ENCODE measurements at regions of chr9 and their contacts with region 1.

Region 1: GRCh38 chr9:124257844-124258606 is at the start of gene NEK6:
- DNase-seq: peak; percentile 32
- H3K4me3 ChIP-seq: peak within 1 kb of the TSS; percentile 4 to 90 (median 70)
- H3K27ac ChIP-seq: peak within 1 kb of the TSS; percentile 76
- H3K4me1 ChIP-seq: peaks cover 38% of the 10 kb centered on the region
- H3K27me3 ChIP-seq: no peaks in the 10 kb centered on the region
- CTCF ChIP-seq: no peak
- POLR2A ChIP-seq: no peak
- total RNA-seq, gene NEK6: 65.9 and 67.1 TPM in 2 replicates

Region 2: DNA sequence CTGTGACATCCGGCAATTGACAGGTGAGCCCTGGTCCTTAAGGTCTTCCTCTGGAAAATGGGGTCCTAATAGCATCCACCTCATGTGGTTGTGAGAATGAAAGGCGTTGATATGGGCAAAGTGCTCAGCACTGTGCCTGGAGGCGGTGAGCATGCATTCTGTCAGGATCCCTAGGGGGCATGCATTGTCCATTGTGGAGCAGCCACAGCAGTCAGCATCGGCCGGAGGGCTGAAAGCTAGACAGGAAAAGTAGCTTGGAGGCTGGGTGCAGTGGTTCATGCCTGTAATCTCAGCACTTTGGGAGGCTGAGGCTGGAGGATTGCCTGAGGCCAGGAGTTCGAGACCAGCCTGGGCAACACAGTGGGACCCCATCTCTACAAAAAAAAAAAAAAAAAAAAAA is 124.3 kb before region 1 on chr9:
- CTCF ChIA-PET with region 1: interaction called, 20 read pairs
- POLR2A ChIA-PET with region 1: no interaction called
- dilution Hi-C with region 1: no loop called
- intact Hi-C with region 1: no loop called
- DNase-seq: peak; percentile 68
- H3K4me3 ChIP-seq: no peak overlapping the region
- H3K27ac ChIP-seq: no peak overlapping the region
- H3K4me1 ChIP-seq: peaks cover 7% of the 10 kb centered on the region
- H3K27me3 ChIP-seq: no peaks in the 10 kb centered on the region
- CTCF ChIP-seq: peak; percentile 36 to 64
- POLR2A ChIP-seq: no peak

Region 3: DNA sequence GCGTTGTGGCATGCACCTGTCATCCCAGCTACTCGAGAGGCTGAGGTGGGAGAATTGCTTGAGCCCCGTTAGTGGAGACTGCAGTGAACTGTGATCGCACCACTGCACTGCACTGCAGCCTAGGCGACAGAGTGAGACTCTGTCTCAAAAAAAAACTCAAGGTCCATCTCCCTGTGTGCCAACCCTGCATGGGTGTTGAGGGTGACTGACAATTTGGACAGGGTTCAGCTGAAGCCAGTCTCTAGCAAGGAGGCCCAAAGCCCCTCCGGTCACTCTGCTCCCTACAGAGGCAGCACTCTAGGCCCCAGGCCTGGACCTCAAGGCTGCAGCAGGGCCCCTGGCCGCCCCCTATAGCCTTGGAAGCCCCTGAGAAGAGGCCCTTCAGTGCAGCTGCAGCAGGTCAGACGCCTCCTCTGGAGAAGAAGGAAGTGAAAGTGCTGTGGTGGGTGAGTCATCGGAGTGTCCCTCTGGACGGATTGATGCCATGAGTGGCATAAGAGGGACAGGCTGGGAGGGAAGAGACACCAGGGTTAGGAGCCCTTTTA is 39.5 kb before region 1 on chr9:
- CTCF ChIA-PET with region 1: interaction called, 3 read pairs
- POLR2A ChIA-PET with region 1: no interaction called
- dilution Hi-C with region 1: no loop called
- intact Hi-C with region 1: loop called (anchors 2 kb)
- DNase-seq: peak; percentile 68
- H3K4me3 ChIP-seq: no peak overlapping the region
- H3K27ac ChIP-seq: peak overlapping the region; percentile 42
- H3K4me1 ChIP-seq: peaks cover 53% of the 10 kb centered on the region
- H3K27me3 ChIP-seq: no peaks in the 10 kb centered on the region
- CTCF ChIP-seq: peak in 1 of 2 donors; percentile 20
- POLR2A ChIP-seq: no peak

Region 4: DNA sequence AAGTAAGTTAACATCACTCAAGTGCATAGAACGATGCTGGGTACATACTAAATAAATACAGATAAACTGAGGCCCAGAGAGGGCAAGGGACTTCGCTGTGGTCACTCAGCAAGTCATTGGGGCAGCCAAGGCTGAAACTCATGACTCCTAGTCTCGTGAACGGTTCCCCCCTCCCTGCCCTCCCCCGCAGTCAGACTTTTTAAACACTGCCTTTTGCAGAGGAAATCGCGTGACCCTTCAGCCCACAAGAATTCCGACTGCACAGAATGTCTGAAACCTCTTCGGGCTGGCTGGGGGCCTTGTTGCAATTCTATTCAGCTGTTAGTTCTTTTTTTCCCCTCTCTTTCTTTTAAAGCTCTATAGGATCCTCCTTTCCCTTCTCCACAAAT is 27.9 kb after region 1 on chr9:
- CTCF ChIA-PET with region 1: interaction called, 9 read pairs
- POLR2A ChIA-PET with region 1: interaction called, 3 read pairs
- dilution Hi-C with region 1: no loop called
- intact Hi-C with region 1: loop called (anchors 1 kb)
- DNase-seq: peak; percentile 90
- H3K4me3 ChIP-seq: no peak overlapping the region
- H3K27ac ChIP-seq: peak overlapping the region; percentile 89
- H3K4me1 ChIP-seq: peaks cover 59% of the 10 kb centered on the region
- H3K27me3 ChIP-seq: no peaks in the 10 kb centered on the region
- CTCF ChIP-seq: no peak
- POLR2A ChIP-seq: no peak

Region 5: GRCh38 chr9:124309665-124310064 is 51.6 kb after region 1 on chr9:
- CTCF ChIA-PET with region 1: interaction called, 4 read pairs
- POLR2A ChIA-PET with region 1: interaction called, 3 read pairs
- dilution Hi-C with region 1: no loop called
- intact Hi-C with region 1: loop called (anchors 1 kb)
- DNase-seq: peak; percentile 97
- H3K4me3 ChIP-seq: no peak overlapping the region
- H3K27ac ChIP-seq: peak overlapping the region; percentile 84
- H3K4me1 ChIP-seq: peaks cover 31% of the 10 kb centered on the region
- H3K27me3 ChIP-seq: no peaks in the 10 kb centered on the region
- CTCF ChIP-seq: no peak
- POLR2A ChIP-seq: no peak

Region 6: GRCh38 chr9:124415102-124415851 is 157.3 kb after region 1 on chr9 and contains the start of gene PSMB7:
- CTCF ChIA-PET with region 1: no interaction called
- POLR2A ChIA-PET with region 1: no interaction called
- dilution Hi-C with region 1: no loop called
- intact Hi-C with region 1: loop called (anchors 5 kb)
- DNase-seq: peak; percentile 97
- H3K4me3 ChIP-seq: peak within 1 kb of the TSS; percentile 63 to 97 (median 74)
- H3K27ac ChIP-seq: peak within 1 kb of the TSS; percentile 88
- H3K4me1 ChIP-seq: peaks cover 36% of the 10 kb centered on the region
- H3K27me3 ChIP-seq: no peaks in the 10 kb centered on the region
- CTCF ChIP-seq: peak; percentile 86 to 87
- POLR2A ChIP-seq: peak; percentile 26
- total RNA-seq, gene PSMB7: 227 and 241 TPM in 2 replicates